ENCODE measurements at regions of chr1 and their contacts with region 1.

Region 1: DNA sequence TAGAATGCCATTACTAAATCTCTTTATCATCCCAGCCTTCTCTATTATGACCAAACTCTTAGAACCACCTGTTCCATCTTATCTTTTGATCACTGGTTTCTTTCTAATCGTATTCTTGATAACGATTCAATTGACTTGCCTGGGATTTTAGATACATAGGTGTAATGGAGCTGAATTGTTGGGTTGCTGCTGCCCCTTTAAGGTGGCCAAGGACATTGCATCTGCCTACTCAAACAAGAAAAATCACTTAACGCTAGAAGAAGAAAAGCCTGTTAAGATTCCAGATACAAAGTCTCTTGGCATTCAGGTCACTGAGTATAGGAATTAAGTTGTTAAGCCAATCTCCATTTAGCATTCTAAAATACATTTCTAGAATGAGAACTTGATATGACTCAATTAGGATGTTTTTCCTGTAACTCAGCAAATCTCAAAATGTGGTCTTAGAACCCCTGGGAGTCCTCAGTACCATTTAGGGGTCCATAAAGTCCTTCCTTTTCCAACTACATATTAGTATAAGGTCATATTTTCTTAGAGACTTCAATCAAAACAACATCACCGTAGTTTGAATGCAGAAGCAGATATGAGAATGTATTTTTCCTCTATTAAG is 12.4 kb downstream of the NEXN start:
- DNase-seq: peak; percentile 83
- H3K4me3 ChIP-seq: no peak overlapping the region
- H3K27ac ChIP-seq: no peak overlapping the region
- H3K4me1 ChIP-seq: peaks cover 4% of the 10 kb centered on the region
- H3K27me3 ChIP-seq: no peaks in the 10 kb centered on the region
- CTCF ChIP-seq: peak; percentile 56 to 63
- POLR2A ChIP-seq: no peak

Region 2: DNA sequence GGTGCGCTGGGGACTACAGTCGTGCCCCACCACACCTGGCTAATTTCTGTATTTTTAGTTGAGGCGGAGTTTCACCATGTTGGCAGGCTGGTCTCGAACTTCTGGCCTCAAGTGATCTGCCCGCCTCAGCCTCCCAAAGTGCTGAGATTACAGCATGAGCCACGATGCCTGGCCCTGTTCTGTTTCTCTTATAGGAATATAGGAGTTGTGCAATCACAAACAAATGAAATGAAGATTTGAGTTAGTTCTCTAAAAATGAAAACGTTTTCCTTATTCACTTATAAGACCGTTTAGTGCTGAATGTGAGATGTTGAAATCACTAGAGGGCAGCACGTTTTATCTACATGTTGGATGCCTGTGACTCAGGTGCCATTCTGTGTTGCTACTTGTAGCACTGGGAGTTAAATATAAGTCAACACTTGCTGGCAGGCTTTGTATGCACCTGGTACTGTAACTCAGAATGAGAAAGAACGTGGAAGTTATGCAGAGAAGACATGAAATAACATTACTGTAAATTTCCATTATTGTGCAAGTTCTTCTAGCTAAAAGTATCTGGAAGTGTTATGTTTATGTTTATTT is 75.6 kb before region 1 on chr1:
- CTCF ChIA-PET with region 1: interaction called, 48 read pairs
- POLR2A ChIA-PET with region 1: no interaction called
- dilution Hi-C with region 1: no loop called
- intact Hi-C with region 1: loop called (anchors 1 kb)
- DNase-seq: peak; percentile 76
- H3K4me3 ChIP-seq: no peak overlapping the region
- H3K27ac ChIP-seq: no peak overlapping the region
- H3K4me1 ChIP-seq: peaks cover 8% of the 10 kb centered on the region
- H3K27me3 ChIP-seq: no peaks in the 10 kb centered on the region
- CTCF ChIP-seq: peak in 1 of 2 donors; percentile 20
- POLR2A ChIP-seq: no peak

Region 3: GRCh38 chr1:77832901-77833300 is 67.9 kb before region 1 on chr1:
- CTCF ChIA-PET with region 1: interaction called, 48 read pairs
- POLR2A ChIA-PET with region 1: no interaction called
- dilution Hi-C with region 1: no loop called
- intact Hi-C with region 1: loop called (anchors 2 kb)
- DNase-seq: peak; percentile 90
- H3K4me3 ChIP-seq: no peak overlapping the region
- H3K27ac ChIP-seq: peak overlapping the region; percentile 86
- H3K4me1 ChIP-seq: peaks cover 45% of the 10 kb centered on the region
- H3K27me3 ChIP-seq: no peaks in the 10 kb centered on the region
- CTCF ChIP-seq: no peak
- POLR2A ChIP-seq: no peak